CD8-positive, alpha-beta memory T cell (primary cell): ENCODE measurements at regions of chr1 and their contacts with region 1.

Region 1: DNA sequence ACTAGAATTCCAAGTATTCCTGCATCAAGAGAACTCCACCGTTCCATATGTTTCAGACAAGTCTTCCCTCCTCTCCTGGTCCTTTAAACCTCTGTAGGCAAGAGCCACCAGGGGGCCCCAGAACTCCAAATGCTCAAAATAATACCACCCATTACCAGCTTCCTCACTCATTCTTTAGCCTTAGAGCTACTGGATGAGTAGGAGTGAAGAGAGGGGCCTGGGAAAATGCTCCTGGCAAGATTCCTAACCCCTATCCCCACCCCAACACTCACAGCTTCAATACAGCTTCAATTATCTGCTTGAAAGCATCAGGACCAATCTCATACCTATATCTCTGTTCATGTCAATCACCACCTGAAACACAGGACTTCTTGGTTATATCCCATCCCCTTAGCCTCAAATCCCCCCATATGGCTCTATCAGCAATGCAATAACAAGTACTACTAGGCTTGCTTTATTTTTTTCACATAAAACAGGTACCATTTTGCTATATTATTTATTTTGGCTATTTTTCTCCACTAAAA is 9.7 kb downstream of the TOR1AIP2 start:
- DNase-seq: peak; percentile 25 to 63 (median 33)
- H3K4me3 ChIP-seq: no peak overlapping the region
- H3K4me3 Mint-ChIP-seq: no peak overlapping the region
- H3K27ac ChIP-seq: no peak overlapping the region
- H3K27ac Mint-ChIP-seq: peak overlapping the region in 6 of 8 donors; percentile 1 to 85 (median 30)
- H3K4me1 ChIP-seq: no peaks in the 10 kb centered on the region
- H3K4me1 Mint-ChIP-seq: peaks cover 19 to 35% (median 31%) of the 10 kb centered on the region in 3 donors
- H3K27me3 ChIP-seq: no peaks in the 10 kb centered on the region
- H3K27me3 Mint-ChIP-seq: no peaks in the 10 kb centered on the region

Region 2: DNA sequence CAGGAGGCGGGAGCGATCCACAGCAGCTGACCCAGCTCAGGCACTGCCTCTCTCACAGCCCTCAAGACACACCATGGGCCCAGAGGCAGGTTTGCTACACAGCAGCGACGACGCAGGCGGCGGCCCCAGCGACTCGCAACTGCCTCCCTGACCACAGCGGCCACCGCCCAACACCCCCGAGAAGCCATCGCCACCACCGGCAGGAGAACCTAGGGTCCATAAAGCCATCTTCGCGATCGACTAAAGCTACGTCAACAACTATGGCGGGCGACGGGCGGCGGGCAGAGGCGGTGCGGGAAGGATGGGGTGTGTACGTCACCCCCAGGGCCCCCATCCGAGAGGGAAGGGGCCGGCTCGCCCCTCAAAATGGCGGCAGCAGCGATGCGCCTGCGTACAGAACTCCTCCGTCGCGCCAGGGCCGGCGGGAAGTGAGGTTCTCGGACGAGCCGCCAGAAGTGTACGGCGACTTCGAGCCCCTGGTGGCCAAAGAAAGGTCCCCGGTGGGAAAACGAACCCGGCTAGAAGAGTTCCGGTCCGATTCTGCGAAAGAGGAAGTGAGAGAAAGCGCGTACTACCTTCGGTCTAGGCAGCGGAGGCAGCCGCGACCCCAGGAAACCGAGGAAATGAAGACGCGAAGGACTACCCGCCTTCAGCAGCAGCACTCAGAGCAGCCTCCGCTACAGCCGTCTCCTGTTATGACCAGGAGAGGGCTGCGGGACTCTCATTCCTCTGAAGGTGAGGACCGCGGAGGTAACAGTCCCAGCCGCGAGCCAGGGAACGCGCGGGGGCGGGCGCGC is 14.6 kb after region 1 on chr1 and contains the start of gene TOR1AIP1:
- CTCF ChIA-PET with region 1: interaction called, 13 read pairs
- POLR2A ChIA-PET with region 1: interaction called, 6 read pairs
- DNase-seq: peak; percentile 95 to 99 (median 98)
- H3K4me3 ChIP-seq: peak within 1 kb of the TSS; percentile 98
- H3K4me3 Mint-ChIP-seq: peak within 1 kb of the TSS; percentile 93 to 98 (median 95)
- H3K27ac ChIP-seq: peak within 1 kb of the TSS; percentile 100
- H3K27ac Mint-ChIP-seq: peak within 1 kb of the TSS; percentile 99 to 100 (median 100)
- H3K4me1 ChIP-seq: peaks cover 51% of the 10 kb centered on the region
- H3K4me1 Mint-ChIP-seq: peaks cover 58 to 77% (median 72%) of the 10 kb centered on the region in 3 donors
- H3K27me3 ChIP-seq: no peaks in the 10 kb centered on the region
- H3K27me3 Mint-ChIP-seq: no peaks in the 10 kb centered on the region
- total RNA-seq, gene TOR1AIP1: 51.0 to 52.6 TPM

Region 3: DNA sequence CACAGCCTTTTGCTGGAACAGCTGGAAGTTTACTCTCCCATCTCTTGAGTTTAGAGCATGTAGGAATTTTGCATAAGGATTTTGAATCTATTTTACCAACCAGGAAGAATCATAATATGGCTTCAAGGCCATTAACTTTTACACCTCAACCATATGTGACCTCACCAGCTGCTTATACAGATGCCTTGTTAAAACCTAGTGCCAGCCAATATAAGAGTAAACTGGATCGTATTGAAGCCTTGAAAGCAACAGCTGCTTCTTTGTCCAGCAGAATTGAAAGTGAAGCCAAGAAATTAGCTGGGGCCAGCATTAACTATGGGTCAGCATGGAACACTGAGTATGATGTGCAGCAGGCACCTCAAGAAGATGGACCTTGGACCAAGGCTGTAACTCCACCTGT is 152.1 kb after region 1 on chr1:
- CTCF ChIA-PET with region 1: no interaction called
- POLR2A ChIA-PET with region 1: no interaction called
- DNase-seq: no peak
- H3K4me3 ChIP-seq: no peak overlapping the region
- H3K4me3 Mint-ChIP-seq: no peak overlapping the region
- H3K27ac ChIP-seq: no peak overlapping the region
- H3K27ac Mint-ChIP-seq: peak overlapping the region in 2 of 8 donors; percentile 29 to 45
- H3K4me1 ChIP-seq: no peaks in the 10 kb centered on the region
- H3K4me1 Mint-ChIP-seq: peaks cover 0 to 4% (median 0%) of the 10 kb centered on the region in 3 donors
- H3K27me3 ChIP-seq: no peaks in the 10 kb centered on the region
- H3K27me3 Mint-ChIP-seq: no peaks in the 10 kb centered on the region

Region 4: DNA sequence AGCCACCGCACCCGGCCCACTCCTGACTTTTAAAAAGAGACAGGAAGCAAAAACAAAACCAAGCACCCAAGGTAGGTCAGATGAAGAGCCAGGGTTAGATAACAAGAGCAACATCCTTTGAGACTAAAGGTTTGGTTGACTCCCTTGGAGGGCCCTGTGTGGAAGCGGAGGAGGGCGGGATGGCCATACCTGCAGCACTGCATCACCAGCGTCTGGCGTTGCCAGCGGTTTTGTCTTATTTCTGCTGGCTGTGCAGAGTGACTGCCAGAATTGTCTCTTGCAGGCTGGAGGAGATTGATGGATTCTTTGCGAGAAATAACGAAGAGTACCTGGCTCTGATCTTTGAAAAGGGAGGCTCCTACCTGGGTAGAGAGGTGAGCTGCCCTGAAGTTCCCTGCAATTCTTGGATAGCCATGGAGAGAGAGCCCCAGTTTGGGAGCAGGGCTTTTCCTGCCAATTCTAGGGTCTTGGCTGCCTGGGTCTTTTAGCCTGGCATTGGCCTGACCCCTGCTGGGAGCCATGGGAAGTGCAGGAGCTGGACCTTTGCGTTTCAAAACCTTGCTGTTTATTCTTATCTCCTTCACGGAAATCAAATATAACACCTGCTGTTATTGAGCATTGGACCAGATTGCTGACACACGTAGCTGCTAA is 310.8 kb after region 1 on chr1:
- CTCF ChIA-PET with region 1: interaction called, 51 read pairs
- POLR2A ChIA-PET with region 1: no interaction called
- DNase-seq: peak; percentile 44 to 73 (median 51)
- H3K4me3 ChIP-seq: no peak overlapping the region
- H3K4me3 Mint-ChIP-seq: no peak overlapping the region
- H3K27ac ChIP-seq: no peak overlapping the region
- H3K27ac Mint-ChIP-seq: peak overlapping the region in 2 of 8 donors; percentile 51 to 87
- H3K4me1 ChIP-seq: no peaks in the 10 kb centered on the region
- H3K4me1 Mint-ChIP-seq: peaks cover 0 to 2% (median 0%) of the 10 kb centered on the region in 3 donors
- H3K27me3 ChIP-seq: no peaks in the 10 kb centered on the region
- H3K27me3 Mint-ChIP-seq: no peaks in the 10 kb centered on the region